ENCODE measurements at regions of chr17 and their contacts with region 1.

Region 1: DNA sequence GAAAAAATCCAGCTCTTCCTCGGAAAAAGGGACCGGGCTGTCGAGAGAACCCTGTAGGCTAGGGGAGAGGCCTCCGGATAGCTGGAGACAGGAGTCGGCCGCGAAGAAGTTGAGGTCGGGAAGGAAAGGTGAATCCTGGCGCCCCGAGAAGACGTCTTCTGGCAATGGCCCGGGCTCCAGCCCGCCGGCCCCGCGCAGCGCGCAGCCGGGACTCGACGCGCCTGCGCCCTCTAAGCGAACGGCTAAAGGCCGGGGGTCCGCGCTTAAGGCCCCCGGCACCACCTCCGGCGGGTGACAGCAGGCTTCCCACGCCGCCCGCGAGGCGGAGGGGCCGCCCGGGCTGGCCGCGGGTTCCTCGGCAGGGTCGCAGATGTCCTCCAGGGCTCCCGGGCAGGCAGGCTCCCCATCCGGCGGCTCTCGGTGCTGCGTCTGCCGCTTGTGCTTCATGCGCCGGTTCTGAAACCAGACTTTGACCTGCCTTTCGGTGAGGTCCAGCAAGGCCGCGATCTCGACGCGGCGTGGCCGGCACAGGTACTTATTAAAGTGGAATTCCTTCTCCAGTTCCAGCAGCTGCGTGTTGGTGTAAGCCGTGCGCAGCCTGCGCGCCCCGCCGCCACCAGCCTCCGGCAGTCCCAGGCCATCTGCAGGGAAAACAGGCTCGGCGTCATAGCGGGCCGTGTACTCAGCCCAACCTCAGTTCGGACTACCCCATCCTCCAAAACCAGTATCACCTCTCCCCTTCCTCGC is 1.6 kb downstream of the HOXB2 start:
- DNase-seq: peak; percentile 74
- H3K4me3 Mint-ChIP-seq: peak overlapping the region; percentile 84
- H3K27ac Mint-ChIP-seq: peak overlapping the region; percentile 96
- H3K4me1 Mint-ChIP-seq: peaks cover 37% of the 10 kb centered on the region
- H3K27me3 Mint-ChIP-seq: peaks cover 18% of the 10 kb centered on the region

Region 2: DNA sequence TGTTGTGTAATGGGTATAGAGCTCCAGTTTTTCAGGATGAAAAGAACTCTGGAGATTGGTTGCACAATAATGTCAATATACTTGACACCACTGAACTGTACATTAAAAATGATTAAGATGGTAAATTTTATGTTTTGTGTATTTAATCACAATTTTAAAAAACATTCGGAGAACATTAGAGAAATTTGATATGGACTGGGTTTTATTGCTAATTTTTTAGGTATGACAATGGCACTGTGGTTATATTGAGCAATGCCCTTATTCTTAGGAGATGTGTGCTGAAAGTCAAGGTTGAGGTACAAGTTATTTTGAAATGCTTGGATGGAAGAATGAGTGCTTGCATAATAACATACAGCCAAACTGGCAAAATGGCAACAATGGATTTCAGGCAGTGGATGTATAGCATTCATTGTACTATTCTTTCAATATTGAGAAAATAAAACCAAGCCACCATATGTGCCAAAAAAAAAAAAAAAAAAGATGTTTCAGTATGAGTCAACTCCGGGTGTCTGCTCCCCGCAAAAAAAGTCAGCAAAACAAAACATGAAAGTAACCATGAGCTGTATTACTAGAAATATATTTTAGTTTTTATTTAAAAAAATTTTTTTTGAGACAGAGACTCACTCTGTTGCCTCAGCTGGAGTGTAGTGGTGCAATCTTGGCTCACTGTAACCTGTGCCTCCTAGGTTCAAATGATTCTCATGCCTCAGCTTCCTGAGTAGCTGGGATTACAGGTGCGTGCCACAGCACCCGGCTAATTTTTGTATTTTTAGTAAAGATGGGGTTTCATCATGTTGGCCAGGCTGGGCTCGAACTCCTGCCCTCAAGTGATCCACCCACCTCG is 32.3 kb before region 1 on chr17:
- CTCF ChIA-PET with region 1: no interaction called
- POLR2A ChIA-PET with region 1: interaction called, 3 read pairs
- intact Hi-C with region 1: loop called (anchors 2 kb)
- DNase-seq: peak; percentile 62
- H3K4me3 Mint-ChIP-seq: peak overlapping the region; percentile 29
- H3K27ac Mint-ChIP-seq: peak overlapping the region; percentile 77
- H3K4me1 Mint-ChIP-seq: peaks cover 41% of the 10 kb centered on the region
- H3K27me3 Mint-ChIP-seq: peaks cover 5% of the 10 kb centered on the region

Region 3: GRCh38 chr17:48577946-48578615 is 34.8 kb after region 1 on chr17 and contains the start of gene HOXB4:
- CTCF ChIA-PET with region 1: interaction called, 3 read pairs
- POLR2A ChIA-PET with region 1: interaction called, 3 read pairs
- intact Hi-C with region 1: loop called (anchors 5 kb)
- DNase-seq: peak; percentile 82
- H3K4me3 Mint-ChIP-seq: peak within 1 kb of the TSS; percentile 80
- H3K27ac Mint-ChIP-seq: peak within 1 kb of the TSS; percentile 59
- H3K4me1 Mint-ChIP-seq: peaks cover 35% of the 10 kb centered on the region
- H3K27me3 Mint-ChIP-seq: peaks cover 42% of the 10 kb centered on the region
- total RNA-seq, gene HOXB4: 2.3 TPM